Sigmoid colon (tissue), 7 donors: ENCODE measurements at regions of chr3 and their contacts with region 1.

Region 1: DNA sequence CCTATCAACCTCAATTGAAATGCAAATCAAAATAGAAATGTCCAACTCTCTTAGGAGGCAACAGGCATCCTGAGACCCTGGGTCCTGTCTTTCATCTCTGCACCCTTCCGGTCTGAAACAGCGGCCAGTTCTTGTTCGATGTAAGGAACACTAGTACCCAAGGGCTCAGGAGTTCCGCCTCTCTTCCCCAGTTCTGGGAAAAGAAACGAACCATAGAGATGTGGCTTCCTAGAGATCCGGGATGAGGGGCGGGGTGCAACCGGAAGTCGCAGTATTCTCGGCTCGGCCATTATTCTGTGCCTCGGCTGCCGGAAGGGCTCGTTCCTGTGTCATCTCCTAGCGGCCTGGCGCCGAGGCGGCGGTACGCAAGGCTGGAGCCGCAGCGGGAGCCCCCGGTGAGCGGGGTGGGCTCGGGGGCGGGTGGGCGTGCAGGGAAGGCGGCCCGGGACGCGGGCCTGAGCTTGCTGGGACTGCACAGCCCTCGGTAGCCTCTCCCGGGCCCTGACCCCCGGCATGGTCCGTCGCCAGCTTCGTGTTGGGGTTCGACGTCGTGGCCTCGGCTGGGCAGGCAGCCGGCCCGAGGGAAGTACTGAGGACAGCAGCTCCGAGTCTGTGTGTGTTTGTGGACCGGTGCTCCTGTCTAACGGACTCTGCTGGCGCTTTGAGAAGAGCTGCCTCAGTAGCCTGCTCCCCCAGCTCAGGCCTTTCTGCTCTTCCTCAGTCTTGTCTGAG is at the start of gene ZNF197:
- DNase-seq: peak; percentile 93
- H3K4me3 ChIP-seq: peak within 1 kb of the TSS; percentile 67 to 89 (median 80)
- H3K27ac ChIP-seq: peak within 1 kb of the TSS; percentile 89 to 93 (median 90)
- H3K4me1 ChIP-seq: peaks cover 0 to 34% (median 27%) of the 10 kb centered on the region in 4 donors
- H3K27me3 ChIP-seq: no peaks in the 10 kb centered on the region
- CTCF ChIP-seq: no peak
- EP300 ChIP-seq: no peak
- POLR2A ChIP-seq: no peak
- total RNA-seq, gene ZNF197: 19.1 to 30.8 (median 21.0) TPM

Region 2: DNA sequence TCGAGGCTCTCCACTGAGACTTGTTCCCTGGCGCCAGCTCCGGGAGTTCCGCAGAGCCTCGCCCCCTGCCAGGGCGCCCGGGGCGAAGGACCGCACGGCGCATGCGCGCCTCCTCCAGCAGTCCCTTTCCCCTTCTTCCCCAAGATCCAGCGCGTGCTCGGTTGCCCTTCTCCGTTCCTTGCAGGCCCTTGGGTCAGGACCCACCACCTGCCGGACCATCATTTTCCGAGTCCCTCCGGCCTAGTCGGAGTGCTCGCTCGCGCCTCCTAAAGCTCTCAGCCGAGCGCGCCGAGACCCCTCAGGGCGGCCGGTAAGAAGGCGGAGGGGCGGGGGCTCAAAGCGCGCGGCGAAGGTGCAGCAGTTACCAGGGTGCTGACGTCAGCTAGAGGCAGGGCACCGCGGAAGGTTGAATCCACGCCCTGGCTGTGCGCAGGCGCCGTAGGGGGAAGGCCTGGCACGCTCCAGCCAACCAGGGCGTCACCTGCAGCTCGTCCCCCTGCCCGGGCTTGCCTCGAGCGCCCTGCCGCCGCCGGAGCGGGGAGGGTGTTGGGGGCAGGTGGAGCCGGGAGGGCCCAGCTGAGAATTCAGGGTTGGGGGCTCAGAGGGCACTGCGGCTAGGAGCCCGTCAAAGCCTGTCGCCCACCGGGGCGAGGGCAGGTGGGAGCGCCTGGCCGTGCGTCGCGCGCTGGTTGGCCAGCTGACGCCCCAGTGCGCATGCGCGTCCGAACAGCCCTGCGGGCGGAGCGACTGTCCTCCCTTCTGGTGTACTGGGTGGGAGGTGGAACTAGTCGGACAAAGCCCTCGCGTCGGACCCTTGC is 286.7 kb before region 1 on chr3 and contains the start of gene TCAIM:
- intact Hi-C with region 1: loop called (anchors 2 kb)
- DNase-seq: peak; percentile 99
- H3K4me3 ChIP-seq: peak within 1 kb of the TSS; percentile 61 to 78 (median 69)
- H3K27ac ChIP-seq: peak within 1 kb of the TSS; percentile 90 to 97 (median 96)
- H3K4me1 ChIP-seq: peaks cover 0 to 47% (median 30%) of the 10 kb centered on the region in 4 donors
- H3K27me3 ChIP-seq: no peaks in the 10 kb centered on the region
- CTCF ChIP-seq: no peak
- EP300 ChIP-seq: peak in 1 of 4 donors; percentile 6
- POLR2A ChIP-seq: peak; percentile 94 to 95
- total RNA-seq, gene TCAIM: 30.3 to 39.3 (median 33.8) TPM

Region 3: DNA sequence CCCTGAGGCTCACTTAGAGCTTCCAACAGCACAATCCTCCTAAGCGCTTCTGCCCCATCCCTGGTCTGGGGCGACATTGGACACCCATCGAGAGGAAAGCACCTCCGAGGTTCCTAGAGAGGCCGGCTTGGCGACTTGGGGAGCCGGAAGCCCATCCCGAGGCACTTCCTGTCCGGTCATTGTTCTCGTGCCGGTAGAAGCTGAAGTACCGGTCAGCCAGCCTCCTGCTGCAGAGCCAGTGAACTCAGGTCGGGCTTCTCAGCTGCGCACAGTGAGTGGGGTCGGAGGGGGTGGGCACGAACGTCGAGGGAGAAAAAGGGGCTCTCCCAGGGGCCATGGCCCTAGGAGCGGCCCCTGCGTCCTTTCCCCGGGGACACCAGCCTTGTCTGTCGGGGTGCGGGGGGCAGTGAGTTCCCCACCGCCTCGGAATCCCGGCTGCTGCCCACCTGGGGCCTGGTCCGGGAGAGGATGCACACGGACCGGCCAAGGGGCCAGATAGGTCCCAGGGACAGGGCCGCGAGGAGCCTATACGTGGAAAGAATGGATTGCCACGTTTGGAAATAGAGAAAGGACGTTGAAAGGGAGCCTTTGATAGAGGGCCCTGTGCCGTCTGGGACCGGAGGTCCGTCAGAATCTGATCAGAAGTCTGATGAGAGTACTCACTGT is 23.8 kb after region 1 on chr3 and contains the start of gene ZNF35:
- intact Hi-C with region 1: loop called (anchors 1 kb)
- DNase-seq: peak; percentile 85
- H3K4me3 ChIP-seq: peak within 1 kb of the TSS; percentile 66 to 94 (median 82)
- H3K27ac ChIP-seq: peak within 1 kb of the TSS; percentile 74 to 81 (median 76)
- H3K4me1 ChIP-seq: peaks cover 0 to 15% (median 6%) of the 10 kb centered on the region in 4 donors
- H3K27me3 ChIP-seq: no peaks in the 10 kb centered on the region
- CTCF ChIP-seq: no peak
- EP300 ChIP-seq: no peak
- POLR2A ChIP-seq: no peak
- total RNA-seq, gene ZNF35: 12.1 to 15.3 (median 14.9) TPM

Region 4: DNA sequence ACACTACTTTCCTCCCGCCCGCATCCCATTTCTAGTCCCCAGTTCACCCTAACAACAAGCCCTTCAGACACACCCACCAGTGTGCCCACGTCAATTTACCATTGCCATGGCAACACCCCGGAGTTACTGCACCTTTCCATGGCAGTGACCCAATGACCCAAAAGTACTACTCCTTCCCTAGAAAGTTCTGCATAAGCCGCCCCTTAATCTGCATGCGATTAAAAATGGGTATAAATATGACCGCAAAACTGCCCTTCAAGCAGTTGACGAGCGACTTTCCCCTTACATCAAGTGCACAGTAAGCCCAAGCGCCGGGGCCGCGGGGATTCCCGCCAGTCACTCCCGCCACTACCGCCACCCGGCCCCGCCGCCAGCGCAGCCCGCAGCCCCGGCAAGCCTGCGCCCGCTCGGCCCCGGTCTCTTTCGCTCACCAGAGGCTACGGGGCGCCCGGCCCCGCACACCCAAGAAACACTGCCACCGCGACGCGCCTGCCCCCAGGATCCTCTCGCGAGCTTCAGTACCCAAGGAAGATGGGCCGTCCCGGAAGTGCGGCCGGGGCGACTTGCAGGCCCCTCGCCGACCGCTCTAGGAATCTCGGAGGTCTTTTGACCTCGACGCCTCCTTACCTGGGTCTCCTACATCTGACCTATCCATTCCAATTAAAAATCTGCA is 60.3 kb after region 1 on chr3:
- intact Hi-C with region 1: loop called (anchors 2 kb)
- DNase-seq: peak; percentile 84
- H3K4me3 ChIP-seq: peak overlapping the region; percentile 74 to 85 (median 78)
- H3K27ac ChIP-seq: peak overlapping the region; percentile 70 to 76 (median 72)
- H3K4me1 ChIP-seq: peaks cover 0 to 13% (median 8%) of the 10 kb centered on the region in 4 donors
- H3K27me3 ChIP-seq: peaks cover 0 to 5% (median 0%) of the 10 kb centered on the region in 3 donors
- CTCF ChIP-seq: no peak
- EP300 ChIP-seq: no peak
- POLR2A ChIP-seq: no peak